IMR-90 (cell line): ENCODE measurements at regions of chr11 and their contacts with region 1.

Region 1: GRCh38 chr11:73295231-73295995 is 12.7 kb upstream of the ARHGEF17 start:
- DNase-seq: peak; percentile 91
- ATAC-seq: peak; percentile 93
- H3K4me3 ChIP-seq: no peak overlapping the region
- H3K27ac ChIP-seq: peak overlapping the region; percentile 19
- H3K4me1 ChIP-seq: peaks cover 1% of the 10 kb centered on the region; the same call in 1 of the 2 replicates
- H3K27me3 ChIP-seq: no peaks in the 10 kb centered on the region
- CTCF ChIP-seq: peak; percentile 93
- POLR2A ChIP-seq: no peak
- RAD21 ChIP-seq: peak; percentile 76

Region 2: GRCh38 chr11:73335204-73335923 is 40.0 kb after region 1 on chr11:
- CTCF ChIA-PET with region 1: interaction called, 6 read pairs
- POLR2A ChIA-PET with region 1: no interaction called
- dilution Hi-C with region 1: no loop called
- in situ Hi-C with region 1: loop called (anchors 5 kb)
- intact Hi-C with region 1: loop called (anchors 1 kb)
- DNase-seq: peak; percentile 82
- ATAC-seq: peak; percentile 67
- H3K4me3 ChIP-seq: no peak overlapping the region
- H3K27ac ChIP-seq: peak overlapping the region; percentile 70
- H3K4me1 ChIP-seq: peaks cover 49% of the 10 kb centered on the region
- H3K27me3 ChIP-seq: no peaks in the 10 kb centered on the region
- CTCF ChIP-seq: peak; percentile 99
- POLR2A ChIP-seq: 0 out of 2 replicates have a peak, but pooled peaks have one; percentile 55
- RAD21 ChIP-seq: peak; percentile 99

Region 3: GRCh38 chr11:73393479-73394380 is 98.3 kb after region 1 on chr11:
- CTCF ChIA-PET with region 1: interaction called, 3 read pairs
- POLR2A ChIA-PET with region 1: no interaction called
- dilution Hi-C with region 1: no loop called
- in situ Hi-C with region 1: no loop called
- intact Hi-C with region 1: loop called (anchors 1 kb)
- DNase-seq: peak; percentile 82
- ATAC-seq: peak; percentile 95
- H3K4me3 ChIP-seq: no peak overlapping the region
- H3K27ac ChIP-seq: no peak overlapping the region
- H3K4me1 ChIP-seq: no peaks in the 10 kb centered on the region
- H3K27me3 ChIP-seq: no peaks in the 10 kb centered on the region
- CTCF ChIP-seq: peak; percentile 81
- POLR2A ChIP-seq: no peak
- RAD21 ChIP-seq: peak; percentile 82